Thyroid gland (tissue), 4 donors: ENCODE measurements at regions of chr11 and their contacts with region 1.

Region 1: GRCh38 chr11:117107701-117108590 is 9.7 kb upstream of the SIK3 start:
- DNase-seq: no peak
- H3K4me3 ChIP-seq: no peak overlapping the region
- H3K27ac ChIP-seq: no peak overlapping the region
- H3K4me1 ChIP-seq: no peaks in the 10 kb centered on the region
- H3K27me3 ChIP-seq: no peaks in the 10 kb centered on the region
- CTCF ChIP-seq: no peak
- POLR2A ChIP-seq: no peak

Region 2: GRCh38 chr11:116879800-116880625 is 227.9 kb before region 1 on chr11:
- intact Hi-C with region 1: loop called (anchors 2 kb)
- DNase-seq: peak in 1 of 2 donors; percentile 12
- H3K4me3 ChIP-seq: no peak overlapping the region
- H3K27ac ChIP-seq: peak overlapping the region; percentile 4 to 33 (median 24)
- H3K4me1 ChIP-seq: peaks cover 0 to 5% of the 10 kb centered on the region in 2 donors
- H3K27me3 ChIP-seq: no peaks in the 10 kb centered on the region
- CTCF ChIP-seq: peak; percentile 50 to 84 (median 66)
- POLR2A ChIP-seq: no peak

Region 3: GRCh38 chr11:117072517-117073461 is 35.2 kb before region 1 on chr11:
- intact Hi-C with region 1: no loop called
- DNase-seq: no peak
- H3K4me3 ChIP-seq: no peak overlapping the region
- H3K27ac ChIP-seq: peak overlapping the region; percentile 10 to 61 (median 59)
- H3K4me1 ChIP-seq: peaks cover 44 to 52% of the 10 kb centered on the region in 2 donors
- H3K27me3 ChIP-seq: no peaks in the 10 kb centered on the region
- CTCF ChIP-seq: no peak
- POLR2A ChIP-seq: no peak